BJ (cell line): ENCODE measurements at regions of chr5 and their contacts with region 1.

Region 1: GRCh38 chr5:76771705-76772405 is 47.0 kb upstream of the F2RL1 start:
- DNase-seq: no peak
- H3K4me3 ChIP-seq: no peak overlapping the region
- H3K27me3 ChIP-seq: no peaks in the 10 kb centered on the region
- CTCF ChIP-seq: no peak

Region 2: DNA sequence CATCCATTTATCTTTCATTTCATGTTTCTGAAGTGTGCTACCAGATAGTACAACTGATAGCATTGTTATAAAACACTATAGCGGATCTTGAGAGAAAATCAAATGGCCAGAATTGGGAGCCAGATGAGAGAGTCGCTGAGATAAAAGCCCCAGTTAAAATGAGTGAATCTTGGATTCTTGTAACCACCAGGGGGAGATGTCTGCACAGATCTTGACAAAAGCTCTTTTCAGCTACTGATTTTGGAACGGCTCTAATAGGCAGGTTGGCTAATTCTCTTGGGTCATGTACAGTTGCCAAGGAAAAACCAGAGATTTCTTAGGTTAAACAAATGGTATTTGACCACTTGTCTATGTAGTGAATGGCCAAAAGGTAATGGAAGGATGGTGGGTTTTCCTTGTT is 170.4 kb before region 1 on chr5:
- CTCF ChIA-PET with region 1: interaction called, 257 read pairs
- POLR2A ChIA-PET with region 1: no interaction called
- DNase-seq: no peak
- H3K4me3 ChIP-seq: no peak overlapping the region
- H3K27me3 ChIP-seq: no peaks in the 10 kb centered on the region
- CTCF ChIP-seq: peak; percentile 70

Region 3: GRCh38 chr5:76641514-76642120 is 130.2 kb before region 1 on chr5:
- CTCF ChIA-PET with region 1: interaction called, 14 read pairs
- POLR2A ChIA-PET with region 1: no interaction called
- DNase-seq: no peak
- H3K4me3 ChIP-seq: no peak overlapping the region
- H3K27me3 ChIP-seq: no peaks in the 10 kb centered on the region
- CTCF ChIP-seq: peak; percentile 84

Region 4: DNA sequence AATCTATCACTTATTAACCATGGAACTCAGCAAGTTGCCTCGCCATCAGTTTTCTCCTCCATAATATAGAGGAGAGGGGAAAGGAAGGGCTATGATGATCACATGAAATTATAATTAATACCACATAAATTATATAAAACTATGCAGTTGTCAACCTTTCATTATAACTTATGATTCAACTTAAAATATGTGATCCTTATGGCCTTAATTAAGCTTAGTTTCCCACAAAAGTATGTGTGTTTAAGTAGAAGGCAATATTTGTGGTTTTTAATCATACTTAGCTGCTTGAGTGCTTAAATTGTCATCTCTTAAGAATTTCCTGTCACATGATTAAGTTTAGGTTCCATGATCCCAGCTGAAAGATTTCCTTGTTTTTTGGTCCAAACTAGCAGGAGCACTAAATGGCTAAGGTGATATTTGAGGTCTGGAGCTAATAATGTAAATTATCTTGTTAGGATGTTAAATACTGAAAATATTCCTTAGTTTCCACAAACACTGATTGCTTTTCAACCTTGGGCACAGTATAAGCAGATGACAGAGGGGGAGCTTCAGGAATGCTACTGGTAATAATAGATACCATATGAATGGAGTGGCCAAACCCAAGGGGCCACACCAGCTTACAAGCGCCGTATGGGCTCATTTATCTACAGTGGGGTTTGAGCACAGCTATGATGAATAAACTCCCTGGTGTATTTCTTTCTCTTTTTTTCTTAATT is 82.4 kb before region 1 on chr5:
- CTCF ChIA-PET with region 1: interaction called, 15 read pairs
- POLR2A ChIA-PET with region 1: no interaction called
- DNase-seq: peak; percentile 98
- H3K4me3 ChIP-seq: no peak overlapping the region
- H3K27me3 ChIP-seq: no peaks in the 10 kb centered on the region
- CTCF ChIP-seq: no peak

Region 5: DNA sequence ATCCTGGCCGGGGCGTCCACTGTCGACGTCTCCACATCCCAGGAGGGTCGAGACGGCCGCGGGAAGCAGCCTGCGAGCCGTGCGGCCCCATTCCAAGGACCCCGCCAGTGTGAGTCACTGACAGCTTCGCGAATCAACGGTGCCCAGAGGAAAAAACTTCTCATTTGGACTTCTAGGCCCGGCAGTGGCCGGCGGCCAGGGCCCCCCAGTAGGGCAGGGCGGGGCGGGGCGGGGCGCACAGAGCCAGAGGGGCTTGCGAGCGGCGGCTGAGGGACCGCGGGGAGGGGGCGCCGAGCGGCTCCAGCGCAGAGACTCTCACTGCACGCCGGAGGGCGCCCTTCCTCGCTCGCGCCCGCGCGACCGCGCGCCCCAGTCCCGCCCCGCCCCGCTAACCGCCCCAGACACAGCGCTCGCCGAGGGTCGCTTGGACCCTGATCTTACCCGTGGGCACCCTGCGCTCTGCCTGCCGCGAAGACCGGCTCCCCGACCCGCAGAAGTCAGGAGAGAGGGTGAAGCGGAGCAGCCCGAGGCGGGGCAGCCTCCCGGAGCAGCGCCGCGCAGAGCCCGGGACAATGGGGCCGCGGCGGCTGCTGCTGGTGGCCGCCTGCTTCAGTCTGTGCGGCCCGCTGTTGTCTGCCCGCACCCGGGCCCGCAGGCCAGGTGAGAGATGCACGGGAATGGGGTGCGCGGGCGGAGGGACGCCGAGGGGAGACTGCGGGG is 56.0 kb before region 1 on chr5 and contains the start of gene F2R:
- CTCF ChIA-PET with region 1: interaction called, 13 read pairs
- POLR2A ChIA-PET with region 1: no interaction called
- DNase-seq: no peak
- H3K4me3 ChIP-seq: peak within 1 kb of the TSS; percentile 93
- H3K27me3 ChIP-seq: peaks cover 9% of the 10 kb centered on the region; the same call in 1 of the 2 replicates
- CTCF ChIP-seq: no peak; the same call in 1 of the 2 replicates
- polyA plus RNA-seq, gene F2R: 50.4 and 53.9 TPM in 2 replicates

Region 6: GRCh38 chr5:76736679-76737556 is 34.9 kb before region 1 on chr5:
- CTCF ChIA-PET with region 1: interaction called, 13 read pairs
- POLR2A ChIA-PET with region 1: no interaction called
- DNase-seq: no peak
- H3K4me3 ChIP-seq: no peak overlapping the region
- H3K27me3 ChIP-seq: no peaks in the 10 kb centered on the region
- CTCF ChIP-seq: no peak

Region 7: DNA sequence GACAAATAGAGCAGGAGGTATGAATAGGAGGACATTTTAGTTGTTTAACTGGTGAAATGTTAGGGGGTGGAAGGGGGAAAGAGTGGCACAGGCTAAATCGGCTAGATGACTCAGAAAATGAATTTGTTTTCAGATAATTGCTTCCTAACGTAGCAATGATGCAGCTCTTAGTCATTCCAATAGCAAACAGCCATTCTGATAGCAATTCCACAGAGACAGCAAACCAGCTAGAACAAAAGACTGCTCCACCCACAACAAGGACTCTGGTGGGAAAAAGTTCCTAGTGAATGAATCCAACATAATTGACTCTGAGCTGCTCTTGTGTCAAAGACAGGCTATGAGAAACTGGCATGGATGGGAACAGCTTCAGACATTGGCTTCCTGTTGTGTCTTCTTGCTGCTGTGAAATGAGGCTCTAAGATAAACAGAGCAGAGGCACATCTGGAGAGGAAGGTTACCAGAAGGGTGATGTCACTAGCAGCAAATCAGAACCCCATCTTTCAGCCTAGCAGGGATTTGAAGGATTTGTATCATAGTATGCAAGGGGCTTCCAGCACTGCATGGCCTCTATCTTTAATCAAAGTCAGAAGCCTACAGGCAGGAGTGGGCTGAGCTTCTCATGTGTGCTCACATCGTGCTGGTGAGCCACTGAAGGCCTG is 18.9 kb after region 1 on chr5:
- CTCF ChIA-PET with region 1: interaction called, 24 read pairs
- POLR2A ChIA-PET with region 1: no interaction called
- DNase-seq: peak; percentile 90
- H3K4me3 ChIP-seq: no peak overlapping the region
- H3K27me3 ChIP-seq: no peaks in the 10 kb centered on the region
- CTCF ChIP-seq: no peak